Endothelial cell of umbilical vein (primary cell): ENCODE measurements at regions of chr15 and their contacts with region 1.

Region 1: GRCh38 chr15:41230650-41231533 is at the starts of genes CHP1 and EXD1:
- DNase-seq: peak; percentile 98
- H3K4me3 ChIP-seq: peak within 1 kb of the TSS; percentile 73 to 96 (median 87)
- H3K27ac ChIP-seq: peak within 1 kb of the TSS; percentile 71
- H3K4me1 ChIP-seq: peaks cover 15% of the 10 kb centered on the region
- H3K27me3 ChIP-seq: no peaks in the 10 kb centered on the region
- CTCF ChIP-seq: peak; percentile 93 to 98
- POLR2A ChIP-seq: peak; percentile 67
- total RNA-seq, gene CHP1: 84.4 and 96.2 TPM in 2 replicates
- total RNA-seq, gene EXD1: not detected in 2 replicates

Region 2: DNA sequence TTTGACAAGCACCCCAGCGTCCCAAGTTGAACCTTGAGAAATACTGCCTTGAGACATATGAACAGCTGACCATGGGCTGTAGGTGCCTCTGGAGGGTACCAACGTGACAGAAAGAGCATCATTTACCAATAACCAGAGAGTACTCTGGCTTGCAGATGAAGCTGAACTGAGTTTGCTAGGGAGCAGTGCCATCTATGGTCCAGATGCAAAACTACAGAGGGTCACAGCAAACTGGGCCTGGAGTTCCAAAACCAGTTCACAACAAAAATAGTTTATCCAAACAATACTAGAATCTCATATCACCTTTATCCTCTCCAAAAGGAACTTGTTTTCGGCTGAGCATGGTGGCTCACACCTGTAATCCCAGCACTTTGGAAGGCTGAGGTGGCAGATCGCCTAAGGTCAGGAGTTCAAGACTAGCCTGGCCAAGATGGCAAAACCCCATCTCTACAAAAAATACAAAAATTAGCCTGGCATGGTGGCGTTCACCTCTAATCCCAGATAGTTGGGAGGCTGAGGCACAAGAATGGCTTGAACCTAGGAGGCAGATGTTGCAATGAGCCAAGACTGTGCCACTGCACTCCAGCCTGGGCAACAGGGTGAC is 208.3 kb before region 1 on chr15:
- CTCF ChIA-PET with region 1: no interaction called
- POLR2A ChIA-PET with region 1: no interaction called
- dilution Hi-C with region 1: no loop called
- intact Hi-C with region 1: no loop called
- DNase-seq: peak; percentile 80
- H3K4me3 ChIP-seq: no peak overlapping the region
- H3K27ac ChIP-seq: no peak overlapping the region
- H3K4me1 ChIP-seq: peaks cover 32% of the 10 kb centered on the region
- H3K27me3 ChIP-seq: no peaks in the 10 kb centered on the region
- CTCF ChIP-seq: peak; percentile 67 to 73
- POLR2A ChIP-seq: no peak

Region 3: GRCh38 chr15:41283653-41284426 is 52.9 kb after region 1 on chr15:
- CTCF ChIA-PET with region 1: no interaction called
- POLR2A ChIA-PET with region 1: no interaction called
- dilution Hi-C with region 1: no loop called
- intact Hi-C with region 1: loop called (anchors 2 kb)
- DNase-seq: peak; percentile 100
- H3K4me3 ChIP-seq: peak overlapping the region; percentile 83 to 96 (median 95)
- H3K27ac ChIP-seq: peak overlapping the region; percentile 62
- H3K4me1 ChIP-seq: peaks cover 6% of the 10 kb centered on the region
- H3K27me3 ChIP-seq: no peaks in the 10 kb centered on the region
- CTCF ChIP-seq: no peak
- POLR2A ChIP-seq: peak; percentile 97

Region 4: GRCh38 chr15:41331833-41332787 is 101.2 kb after region 1 on chr15 and contains the start of gene OIP5:
- CTCF ChIA-PET with region 1: interaction called, 7 read pairs
- POLR2A ChIA-PET with region 1: no interaction called
- dilution Hi-C with region 1: no loop called
- intact Hi-C with region 1: loop called (anchors 1 kb)
- DNase-seq: peak; percentile 100
- H3K4me3 ChIP-seq: peak within 1 kb of the TSS; percentile 63 to 94 (median 93)
- H3K27ac ChIP-seq: peak within 1 kb of the TSS; percentile 73
- H3K4me1 ChIP-seq: peaks cover 24% of the 10 kb centered on the region
- H3K27me3 ChIP-seq: no peaks in the 10 kb centered on the region
- CTCF ChIP-seq: peak; percentile 55 to 72
- POLR2A ChIP-seq: peak; percentile 88
- total RNA-seq, gene OIP5: 9.2 and 11.4 TPM in 2 replicates

Region 5: GRCh38 chr15:41621200-41622193 is 390.6 kb after region 1 on chr15:
- CTCF ChIA-PET with region 1: no interaction called
- POLR2A ChIA-PET with region 1: no interaction called
- dilution Hi-C with region 1: no loop called
- intact Hi-C with region 1: loop called (anchors 2 kb)
- DNase-seq: peak; percentile 80
- H3K4me3 ChIP-seq: peak overlapping the region; percentile 19 to 39 (median 28)
- H3K27ac ChIP-seq: no peak overlapping the region
- H3K4me1 ChIP-seq: peaks cover 4% of the 10 kb centered on the region
- H3K27me3 ChIP-seq: no peaks in the 10 kb centered on the region
- CTCF ChIP-seq: no peak
- POLR2A ChIP-seq: peak; percentile 22